CD4-positive, alpha-beta memory T cell (primary cell): ENCODE measurements at regions of chr15 and their contacts with region 1.

Region 1: DNA sequence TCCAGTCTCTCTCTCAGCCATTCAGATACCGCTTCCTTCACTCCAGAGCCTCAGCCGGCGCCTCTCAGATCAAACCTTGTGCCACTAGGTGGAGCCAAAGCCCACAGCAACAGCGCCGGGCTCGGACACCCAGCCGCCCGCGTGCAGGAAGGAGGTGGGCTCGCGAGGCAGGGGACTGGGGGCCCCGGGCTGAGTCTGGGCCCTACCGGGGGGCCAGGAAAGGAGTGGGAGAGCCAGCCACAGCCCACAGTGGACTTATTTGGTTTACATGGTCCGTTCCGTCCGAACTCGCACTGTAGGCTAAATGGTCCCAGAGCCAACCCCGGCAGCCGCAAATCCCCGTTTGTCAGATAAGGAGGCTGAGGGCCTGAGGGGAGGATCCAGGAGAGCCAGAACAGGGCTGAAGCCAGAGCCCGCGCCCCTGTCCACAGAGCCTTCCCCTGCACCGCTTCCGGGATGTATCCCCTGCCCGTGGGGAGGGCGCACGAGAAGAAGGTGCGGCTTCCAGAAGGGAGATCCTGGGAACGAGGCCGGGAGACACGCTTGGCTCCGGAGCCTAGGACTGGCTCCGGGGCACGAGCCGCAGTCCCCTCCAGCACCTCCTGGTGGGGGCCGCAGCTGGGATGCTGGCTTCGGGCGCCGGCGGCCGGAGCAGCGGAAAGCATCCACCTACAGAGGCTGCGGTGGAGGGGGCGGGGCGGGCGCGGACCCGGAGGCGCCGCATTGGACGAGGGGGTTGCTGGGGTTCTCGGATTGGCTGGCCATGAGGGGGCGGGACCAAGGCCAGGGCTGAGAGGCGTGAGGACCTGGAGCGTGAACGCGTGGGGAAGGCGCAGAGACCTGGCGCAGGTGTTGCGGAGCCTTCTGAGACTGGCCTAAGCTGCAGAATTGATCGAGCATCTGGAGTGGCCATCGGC is 6.5 kb upstream of the CYP11A1 start:
- DNase-seq: peak; percentile 90 to 96 (median 91)
- H3K4me3 ChIP-seq: peak overlapping the region; percentile 82 to 93
- H3K4me3 Mint-ChIP-seq: peak overlapping the region; percentile 78 to 88 (median 86)
- H3K27ac ChIP-seq: peak overlapping the region; percentile 38
- H3K27ac Mint-ChIP-seq: peak overlapping the region; percentile 46 to 88 (median 67)
- H3K4me1 ChIP-seq: peaks cover 19% of the 10 kb centered on the region
- H3K4me1 Mint-ChIP-seq: peaks cover 6 to 24% (median 13%) of the 10 kb centered on the region in 4 donors
- H3K27me3 ChIP-seq: no peaks in the 10 kb centered on the region
- H3K27me3 Mint-ChIP-seq: peaks cover 8% of the 10 kb centered on the region in 2 donors

Region 2: GRCh38 chr15:73617301-73617831 is 756.6 kb before region 1 on chr15:
- CTCF ChIA-PET with region 1: no interaction called
- POLR2A ChIA-PET with region 1: no interaction called
- intact Hi-C with region 1: no loop called
- DNase-seq: no peak
- H3K4me3 ChIP-seq: no peak overlapping the region
- H3K4me3 Mint-ChIP-seq: no peak overlapping the region
- H3K27ac ChIP-seq: no peak overlapping the region
- H3K27ac Mint-ChIP-seq: peak overlapping the region in 1 of 7 donors; percentile 3
- H3K4me1 ChIP-seq: peaks cover 8% of the 10 kb centered on the region
- H3K4me1 Mint-ChIP-seq: peaks cover 29 to 51% (median 39%) of the 10 kb centered on the region in 4 donors
- H3K27me3 ChIP-seq: no peaks in the 10 kb centered on the region
- H3K27me3 Mint-ChIP-seq: no peaks in the 10 kb centered on the region

Region 3: GRCh38 chr15:74433592-74434262 is 59.7 kb after region 1 on chr15 and contains the start of gene SEMA7A:
- CTCF ChIA-PET with region 1: interaction called, 550 read pairs
- POLR2A ChIA-PET with region 1: interaction called, 6 read pairs
- intact Hi-C with region 1: loop called (anchors 1 kb)
- DNase-seq: peak; percentile 50 to 65 (median 55)
- H3K4me3 ChIP-seq: peak within 1 kb of the TSS; percentile 52 to 62
- H3K4me3 Mint-ChIP-seq: peak within 1 kb of the TSS; percentile 66 to 91 (median 81)
- H3K27ac ChIP-seq: no peak within 1 kb of the TSS
- H3K27ac Mint-ChIP-seq: peak within 1 kb of the TSS in 4 of 7 donors; percentile 19 to 70 (median 53)
- H3K4me1 ChIP-seq: peaks cover 17% of the 10 kb centered on the region
- H3K4me1 Mint-ChIP-seq: peaks cover 6 to 35% (median 17%) of the 10 kb centered on the region in 4 donors
- H3K27me3 ChIP-seq: no peaks in the 10 kb centered on the region
- H3K27me3 Mint-ChIP-seq: peaks cover 2 to 3% of the 10 kb centered on the region in 2 donors
- total RNA-seq, gene SEMA7A: 1.2 to 1.9 TPM

Region 4: DNA sequence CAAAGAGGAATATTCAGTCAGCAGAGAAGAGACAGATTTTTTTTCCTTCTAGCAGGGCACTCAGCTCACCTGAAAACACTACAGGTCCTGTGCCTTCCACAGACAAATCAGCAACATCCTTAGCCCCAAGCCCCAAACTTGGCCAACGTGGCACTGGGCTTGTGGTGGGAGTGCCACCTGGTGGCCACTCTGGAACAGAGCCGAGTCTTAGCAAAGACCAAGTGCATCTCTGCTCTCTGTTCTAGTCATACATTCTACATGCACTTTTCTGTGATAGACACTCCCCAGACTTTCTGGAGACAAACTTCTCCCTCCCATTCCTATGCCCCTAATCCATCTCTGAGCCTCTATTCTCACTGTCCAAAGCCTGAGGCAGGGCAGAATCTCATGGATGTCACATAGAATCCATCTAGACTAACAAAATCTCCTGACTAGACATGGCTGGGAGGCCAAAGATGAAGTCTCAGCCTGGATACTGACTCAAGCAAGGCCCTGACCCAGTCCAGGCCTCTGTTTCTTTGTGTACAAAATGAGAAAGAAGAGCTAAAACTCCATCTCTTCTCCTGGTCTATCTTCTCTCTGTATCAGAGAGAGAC is 64.8 kb after region 1 on chr15:
- CTCF ChIA-PET with region 1: interaction called, 550 read pairs
- POLR2A ChIA-PET with region 1: interaction called, 6 read pairs
- intact Hi-C with region 1: loop called (anchors 1 kb)
- DNase-seq: peak; percentile 61 to 71 (median 66)
- H3K4me3 ChIP-seq: no peak overlapping the region
- H3K4me3 Mint-ChIP-seq: peak overlapping the region in 1 of 8 donors; percentile 44
- H3K27ac ChIP-seq: no peak overlapping the region
- H3K27ac Mint-ChIP-seq: peak overlapping the region in 1 of 7 donors; percentile 9
- H3K4me1 ChIP-seq: peaks cover 11% of the 10 kb centered on the region
- H3K4me1 Mint-ChIP-seq: peaks cover 4 to 17% (median 11%) of the 10 kb centered on the region in 4 donors
- H3K27me3 ChIP-seq: no peaks in the 10 kb centered on the region
- H3K27me3 Mint-ChIP-seq: no peaks in the 10 kb centered on the region

Region 5: GRCh38 chr15:74460871-74461846 is 87.2 kb after region 1 on chr15 and contains the start of gene UBL7:
- CTCF ChIA-PET with region 1: interaction called, 6 read pairs
- POLR2A ChIA-PET with region 1: interaction called, 16 read pairs
- intact Hi-C with region 1: loop called (anchors 1 kb)
- DNase-seq: peak; percentile 89 to 97 (median 91)
- H3K4me3 ChIP-seq: peak within 1 kb of the TSS; percentile 78 to 100
- H3K4me3 Mint-ChIP-seq: peak within 1 kb of the TSS; percentile 88 to 98 (median 94)
- H3K27ac ChIP-seq: peak within 1 kb of the TSS; percentile 84
- H3K27ac Mint-ChIP-seq: peak within 1 kb of the TSS; percentile 66 to 96 (median 92)
- H3K4me1 ChIP-seq: peaks cover 40% of the 10 kb centered on the region
- H3K4me1 Mint-ChIP-seq: peaks cover 32 to 53% (median 46%) of the 10 kb centered on the region in 4 donors
- H3K27me3 ChIP-seq: no peaks in the 10 kb centered on the region
- H3K27me3 Mint-ChIP-seq: no peaks in the 10 kb centered on the region
- total RNA-seq, gene UBL7: 36.4 to 42.4 TPM

Region 6: GRCh38 chr15:74489518-74490338 is 115.7 kb after region 1 on chr15:
- CTCF ChIA-PET with region 1: interaction called, 8 read pairs
- POLR2A ChIA-PET with region 1: no interaction called
- intact Hi-C with region 1: loop called (anchors 1 kb)
- DNase-seq: peak; percentile 49 to 69 (median 54)
- H3K4me3 ChIP-seq: no peak overlapping the region
- H3K4me3 Mint-ChIP-seq: peak overlapping the region in 1 of 8 donors; percentile 20
- H3K27ac ChIP-seq: no peak overlapping the region
- H3K27ac Mint-ChIP-seq: peak overlapping the region in 1 of 7 donors; percentile 39
- H3K4me1 ChIP-seq: peaks cover 10% of the 10 kb centered on the region
- H3K4me1 Mint-ChIP-seq: peaks cover 9 to 12% (median 10%) of the 10 kb centered on the region in 4 donors
- H3K27me3 ChIP-seq: no peaks in the 10 kb centered on the region
- H3K27me3 Mint-ChIP-seq: no peaks in the 10 kb centered on the region

Region 7: GRCh38 chr15:74540761-74541493 is 166.9 kb after region 1 on chr15 and contains the start of gene ARID3B:
- CTCF ChIA-PET with region 1: no interaction called
- POLR2A ChIA-PET with region 1: no interaction called
- intact Hi-C with region 1: loop called (anchors 1 kb)
- DNase-seq: peak; percentile 89 to 96 (median 93)
- H3K4me3 ChIP-seq: peak within 1 kb of the TSS; percentile 64 to 79
- H3K4me3 Mint-ChIP-seq: peak within 1 kb of the TSS; percentile 94 to 100 (median 98)
- H3K27ac ChIP-seq: peak within 1 kb of the TSS; percentile 77
- H3K27ac Mint-ChIP-seq: peak within 1 kb of the TSS; percentile 87 to 99 (median 95)
- H3K4me1 ChIP-seq: peaks cover 39% of the 10 kb centered on the region
- H3K4me1 Mint-ChIP-seq: peaks cover 37 to 62% (median 51%) of the 10 kb centered on the region in 4 donors
- H3K27me3 ChIP-seq: no peaks in the 10 kb centered on the region
- H3K27me3 Mint-ChIP-seq: no peaks in the 10 kb centered on the region
- total RNA-seq, gene ARID3B: 32.9 TPM

Region 8: GRCh38 chr15:74653426-74654123 is 279.6 kb after region 1 on chr15:
- CTCF ChIA-PET with region 1: no interaction called
- POLR2A ChIA-PET with region 1: no interaction called
- intact Hi-C with region 1: no loop called
- DNase-seq: no peak
- H3K4me3 ChIP-seq: no peak overlapping the region
- H3K4me3 Mint-ChIP-seq: no peak overlapping the region
- H3K27ac ChIP-seq: no peak overlapping the region
- H3K27ac Mint-ChIP-seq: peak overlapping the region in 3 of 7 donors; percentile 34 to 57 (median 36)
- H3K4me1 ChIP-seq: no peaks in the 10 kb centered on the region
- H3K4me1 Mint-ChIP-seq: peaks cover 6 to 17% (median 16%) of the 10 kb centered on the region in 4 donors
- H3K27me3 ChIP-seq: no peaks in the 10 kb centered on the region
- H3K27me3 Mint-ChIP-seq: no peaks in the 10 kb centered on the region

Region 9: DNA sequence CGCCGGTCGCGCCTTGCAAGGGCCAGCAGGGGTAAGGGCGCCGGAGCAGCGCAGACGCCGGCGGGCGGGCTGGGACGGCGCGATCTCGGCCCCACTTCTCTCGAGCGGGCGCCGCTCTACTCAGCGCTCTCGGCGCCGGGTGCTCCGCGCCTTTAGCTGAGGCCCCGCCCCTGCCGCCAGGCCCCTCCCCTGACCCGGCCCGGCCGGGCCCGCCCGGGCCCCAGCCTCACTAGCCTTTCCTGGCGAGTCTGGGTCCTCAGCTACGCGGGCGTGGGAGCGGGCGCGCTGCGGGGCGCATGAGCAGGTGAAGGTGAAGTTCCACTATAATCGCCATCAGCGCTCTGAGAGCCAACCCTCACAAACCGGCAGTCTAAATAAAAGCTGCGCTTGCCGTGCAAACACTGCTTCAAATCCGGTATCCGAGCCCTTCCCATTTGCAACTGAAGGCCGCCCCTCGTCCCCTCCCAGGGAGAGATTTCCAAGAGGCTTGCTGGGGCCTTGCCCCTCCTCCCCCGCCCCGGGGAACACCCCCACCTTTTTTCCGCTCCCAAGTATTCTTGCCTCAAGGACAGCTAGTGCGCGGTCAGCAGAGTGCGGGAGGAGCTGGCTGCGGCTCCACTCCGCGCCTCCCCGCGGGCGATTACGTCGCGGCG is 582.8 kb after region 1 on chr15 and contains the start of gene RPP25:
- CTCF ChIA-PET with region 1: no interaction called
- POLR2A ChIA-PET with region 1: no interaction called
- intact Hi-C with region 1: loop called (anchors 5 kb)
- DNase-seq: peak; percentile 43 to 56 (median 52)
- H3K4me3 ChIP-seq: peak within 1 kb of the TSS; percentile 12 to 68
- H3K4me3 Mint-ChIP-seq: peak within 1 kb of the TSS; percentile 75 to 82 (median 80)
- H3K27ac ChIP-seq: no peak within 1 kb of the TSS
- H3K27ac Mint-ChIP-seq: no peak within 1 kb of the TSS
- H3K4me1 ChIP-seq: peaks cover 40% of the 10 kb centered on the region
- H3K4me1 Mint-ChIP-seq: peaks cover 6 to 35% (median 19%) of the 10 kb centered on the region in 4 donors
- H3K27me3 ChIP-seq: peaks cover 19% of the 10 kb centered on the region
- H3K27me3 Mint-ChIP-seq: peaks cover 19 to 20% of the 10 kb centered on the region in 2 donors
- total RNA-seq, gene RPP25: 2.6 to 2.8 TPM